MCF 10A (cell line): ENCODE measurements at regions of chr6 and their contacts with region 1.

Region 1: GRCh38 chr6:116387374-116387773 is 16.6 kb downstream of the DSE start:
- DNase-seq: peak; percentile 96
- H3K4me3 Mint-ChIP-seq: peak overlapping the region; percentile 50
- H3K27ac Mint-ChIP-seq: peak overlapping the region; percentile 89
- H3K4me1 Mint-ChIP-seq: peaks cover 56% of the 10 kb centered on the region
- H3K27me3 Mint-ChIP-seq: no peaks in the 10 kb centered on the region
- CTCF ChIP-seq: no peak

Region 2: DNA sequence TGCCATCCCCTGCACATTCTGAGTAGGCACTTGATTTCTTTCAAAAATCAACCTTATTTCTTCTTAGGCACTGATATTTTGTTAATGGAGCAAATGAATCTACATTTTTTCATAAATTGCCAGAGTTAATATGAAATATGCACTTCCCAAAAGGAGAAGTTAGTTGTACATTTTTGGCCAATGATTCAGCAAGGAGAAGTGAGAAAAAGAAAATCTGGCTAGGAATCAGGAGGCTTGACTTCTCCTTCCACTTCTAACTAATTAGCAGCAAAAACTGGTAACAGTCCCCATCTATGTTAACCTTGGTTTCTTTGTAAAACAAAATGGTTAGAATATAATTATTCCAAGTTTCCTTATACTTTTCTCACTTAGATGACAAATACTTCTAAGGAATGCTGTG is 23.6 kb before region 1 on chr6:
- CTCF ChIA-PET with region 1: interaction called, 3 read pairs
- POLR2A ChIA-PET with region 1: interaction called, 31 read pairs
- intact Hi-C with region 1: no loop called
- DNase-seq: peak; percentile 52
- H3K4me3 Mint-ChIP-seq: peak overlapping the region; percentile 57
- H3K27ac Mint-ChIP-seq: peak overlapping the region; percentile 54
- H3K4me1 Mint-ChIP-seq: peaks cover 13% of the 10 kb centered on the region
- H3K27me3 Mint-ChIP-seq: no peaks in the 10 kb centered on the region
- CTCF ChIP-seq: no peak

Region 3: GRCh38 chr6:116398316-116399010 is 11.1 kb after region 1 on chr6:
- CTCF ChIA-PET with region 1: interaction called, 6 read pairs
- POLR2A ChIA-PET with region 1: interaction called, 28 read pairs
- intact Hi-C with region 1: no loop called
- DNase-seq: peak; percentile 22
- H3K4me3 Mint-ChIP-seq: no peak overlapping the region
- H3K27ac Mint-ChIP-seq: peak overlapping the region; percentile 12
- H3K4me1 Mint-ChIP-seq: peaks cover 29% of the 10 kb centered on the region
- H3K27me3 Mint-ChIP-seq: no peaks in the 10 kb centered on the region
- CTCF ChIP-seq: no peak

Region 4: DNA sequence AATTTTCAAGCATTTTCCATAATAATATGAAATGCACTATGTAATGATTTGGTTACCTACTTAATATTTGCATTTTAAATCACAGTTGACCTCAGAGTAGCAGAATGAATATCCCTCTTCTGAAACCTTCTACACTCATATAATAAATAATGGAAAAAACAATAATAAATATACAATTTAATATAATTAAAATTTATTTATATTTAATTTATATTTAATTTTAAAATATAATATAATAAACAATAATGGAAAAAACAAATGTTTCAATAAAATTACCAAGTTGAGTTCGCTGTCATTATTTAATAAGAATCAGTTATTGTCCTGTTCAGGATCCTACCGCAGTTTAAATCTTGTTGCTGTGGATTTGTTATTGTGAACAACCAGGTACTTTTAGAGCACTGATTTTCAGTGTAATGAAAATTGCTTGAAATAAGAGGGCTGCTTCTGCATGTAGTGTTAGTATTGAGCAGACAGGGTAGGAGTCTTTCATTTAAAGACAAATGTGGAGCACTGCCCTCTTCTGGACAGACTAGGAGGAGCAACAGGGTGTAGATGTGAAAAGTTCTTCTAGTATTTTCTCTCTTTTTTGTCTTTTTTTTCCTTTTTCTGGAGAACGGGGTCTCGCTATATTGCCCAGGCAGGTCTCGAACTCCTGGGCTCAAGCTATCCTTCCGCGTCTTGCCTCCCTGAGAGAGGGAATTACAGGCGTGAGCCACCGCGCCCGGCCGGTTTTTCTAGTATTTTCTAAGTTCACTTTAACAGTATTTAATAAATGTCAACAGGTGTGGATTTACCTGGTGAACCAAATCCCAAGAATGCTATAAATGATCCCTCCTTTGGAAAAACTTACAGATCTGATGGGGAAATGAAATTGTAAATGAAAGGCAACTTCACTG is 144.5 kb after region 1 on chr6:
- CTCF ChIA-PET with region 1: no interaction called
- POLR2A ChIA-PET with region 1: no interaction called
- intact Hi-C with region 1: no loop called
- DNase-seq: peak; percentile 72
- H3K4me3 Mint-ChIP-seq: no peak overlapping the region
- H3K27ac Mint-ChIP-seq: no peak overlapping the region
- H3K4me1 Mint-ChIP-seq: peaks cover 19% of the 10 kb centered on the region
- H3K27me3 Mint-ChIP-seq: no peaks in the 10 kb centered on the region
- CTCF ChIP-seq: peak; percentile 70